CD8-positive, alpha-beta T cell (primary cell): ENCODE measurements at regions of chr14 and their contacts with region 1.

Region 1: DNA sequence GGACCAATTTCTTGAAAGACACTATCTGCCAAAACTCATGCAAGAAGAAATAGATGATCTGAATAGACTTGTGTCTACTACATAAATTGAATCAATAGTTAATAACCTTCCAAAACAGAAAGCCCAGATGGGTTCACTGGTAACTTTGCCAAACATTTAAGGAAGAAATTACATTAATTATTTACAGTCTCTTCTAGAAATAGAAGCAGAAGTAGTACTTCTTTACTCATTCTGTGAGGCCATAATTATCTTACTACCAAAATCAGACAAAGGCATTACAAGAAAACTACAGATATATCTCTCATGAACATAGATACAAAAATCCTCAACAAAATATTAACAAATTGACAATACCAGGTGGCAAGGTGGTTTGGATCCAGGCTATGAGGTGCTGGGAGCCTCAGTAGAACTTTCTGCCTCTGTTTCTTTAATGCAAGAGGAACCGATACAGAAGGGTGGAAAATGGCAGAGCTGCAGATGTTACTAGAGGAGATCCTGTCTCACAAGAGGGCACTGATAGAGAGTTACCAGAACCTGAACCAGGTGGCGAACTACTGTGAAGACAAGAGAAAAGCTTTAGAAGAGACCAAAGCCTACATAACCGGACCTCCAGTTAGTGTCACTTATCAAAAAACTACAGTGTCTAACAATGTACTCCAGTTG is 33.7 kb upstream of the KTN1 start:
- DNase-seq: no peak
- ATAC-seq: no peak
- H3K4me3 ChIP-seq: no peak overlapping the region
- H3K4me3 Mint-ChIP-seq: no peak overlapping the region
- H3K27ac ChIP-seq: no peak overlapping the region
- H3K27ac Mint-ChIP-seq: no peak overlapping the region
- H3K4me1 ChIP-seq: no peaks in the 10 kb centered on the region
- H3K4me1 Mint-ChIP-seq: no peaks in the 10 kb centered on the region
- H3K27me3 ChIP-seq: no peaks in the 10 kb centered on the region
- H3K27me3 Mint-ChIP-seq: no peaks in the 10 kb centered on the region
- CTCF ChIP-seq: no peak

Region 2: GRCh38 chr14:55500219-55500701 is 46.1 kb before region 1 on chr14:
- CTCF ChIA-PET with region 1: no interaction called
- POLR2A ChIA-PET with region 1: no interaction called
- intact Hi-C with region 1: loop called in 1 of 2 experiments (anchors 1 kb)
- DNase-seq: no peak
- ATAC-seq: no peak
- H3K4me3 ChIP-seq: no peak overlapping the region
- H3K4me3 Mint-ChIP-seq: no peak overlapping the region
- H3K27ac ChIP-seq: no peak overlapping the region
- H3K27ac Mint-ChIP-seq: no peak overlapping the region
- H3K4me1 ChIP-seq: no peaks in the 10 kb centered on the region
- H3K4me1 Mint-ChIP-seq: no peaks in the 10 kb centered on the region
- H3K27me3 ChIP-seq: no peaks in the 10 kb centered on the region
- H3K27me3 Mint-ChIP-seq: peaks cover 17% of the 10 kb centered on the region
- CTCF ChIP-seq: no peak